Activated naive CD8-positive, alpha-beta T cell treated with anti-CD3 and anti-CD28 coated beads, Interleukin-2, amount 10 ng/mL, durations not matched to agents 7 days and 5 days (primary cell): ENCODE measurements at regions of chr9 and their contacts with region 1.

Region 1: DNA sequence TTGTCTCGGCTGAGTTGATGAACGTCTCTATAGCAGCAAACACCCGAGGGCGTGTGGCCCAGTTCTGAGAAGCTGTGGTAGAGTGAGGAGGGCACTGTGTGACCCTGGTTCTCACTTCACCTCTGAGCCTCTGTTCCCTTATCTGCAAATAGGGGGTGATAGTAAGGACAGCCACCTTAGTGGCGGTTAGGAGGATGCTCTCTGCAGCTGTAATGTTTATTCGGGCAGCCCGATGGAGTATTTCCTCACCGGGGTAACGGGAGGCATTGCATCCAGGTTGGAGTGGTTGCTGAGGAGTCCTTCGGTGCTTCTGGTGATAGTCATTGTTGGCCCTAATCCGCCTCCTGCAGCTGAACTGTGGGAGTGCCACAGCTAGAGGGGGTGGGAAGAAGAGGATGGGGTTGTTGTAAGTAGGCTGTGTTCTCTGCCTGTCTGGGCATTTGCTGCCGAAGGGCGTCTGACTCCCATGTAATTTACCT is 13.9 kb downstream of the PRRC2B start:
- DNase-seq: peak; percentile 56
- ATAC-seq: peak; percentile 70
- H3K4me3 Mint-ChIP-seq: peak overlapping the region; percentile 81
- H3K27ac Mint-ChIP-seq: peak overlapping the region; percentile 88
- H3K4me1 Mint-ChIP-seq: peaks cover 80% of the 10 kb centered on the region
- H3K27me3 Mint-ChIP-seq: no peaks in the 10 kb centered on the region

Region 2: GRCh38 chr9:131366761-131367401 is 40.9 kb before region 1 on chr9:
- POLR2A ChIA-PET with region 1: interaction called, 27 read pairs
- DNase-seq: no peak
- ATAC-seq: no peak
- H3K4me3 Mint-ChIP-seq: no peak overlapping the region
- H3K27ac Mint-ChIP-seq: no peak overlapping the region
- H3K4me1 Mint-ChIP-seq: peaks cover 4% of the 10 kb centered on the region
- H3K27me3 Mint-ChIP-seq: no peaks in the 10 kb centered on the region

Region 3: DNA sequence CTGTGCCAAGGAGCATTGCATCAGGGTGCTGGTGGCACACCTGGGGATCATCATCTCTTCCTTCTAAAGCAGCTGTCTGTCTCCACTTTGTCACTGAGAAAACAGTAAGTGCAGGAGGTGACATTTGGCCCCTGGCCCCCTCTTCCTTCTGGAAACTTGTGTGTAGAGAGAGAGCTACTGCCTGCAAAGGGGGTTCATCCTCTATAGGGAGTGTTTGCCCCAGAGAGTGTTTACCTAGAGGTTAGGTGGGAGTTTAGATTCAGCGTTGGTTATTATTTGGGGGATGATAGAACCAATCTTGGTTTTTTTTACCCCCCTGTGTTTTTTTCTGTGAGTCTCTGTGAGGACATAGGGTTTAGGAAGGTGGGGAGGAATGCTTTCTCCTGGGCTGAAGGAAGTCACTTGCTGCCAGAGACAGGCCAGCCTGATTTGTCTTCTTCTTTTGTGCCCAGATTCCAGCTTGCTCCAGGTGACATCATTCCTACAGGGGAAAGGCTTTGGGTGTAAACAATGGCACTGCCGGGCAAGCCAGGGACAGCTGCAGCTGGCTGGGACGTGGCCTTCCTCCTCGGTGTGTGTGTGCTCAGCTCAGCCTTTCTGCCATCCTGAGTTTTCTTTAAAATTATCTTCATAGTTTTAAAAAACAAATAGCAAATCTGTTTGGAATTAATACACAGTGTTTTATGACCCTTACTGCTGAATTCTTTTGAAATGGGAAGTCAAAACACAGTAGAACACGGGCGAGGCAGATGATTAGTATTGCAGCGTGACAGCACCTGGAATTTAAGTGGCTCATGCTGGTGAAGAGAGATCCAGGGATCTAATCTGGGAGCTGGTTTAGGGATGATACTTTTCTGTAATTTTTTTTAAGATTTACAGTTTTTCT is 10.6 kb after region 1 on chr9:
- POLR2A ChIA-PET with region 1: interaction called, 38 read pairs
- DNase-seq: no peak
- ATAC-seq: peak; percentile 3
- H3K4me3 Mint-ChIP-seq: peak overlapping the region; percentile 80
- H3K27ac Mint-ChIP-seq: peak overlapping the region; percentile 78
- H3K4me1 Mint-ChIP-seq: peaks cover 79% of the 10 kb centered on the region
- H3K27me3 Mint-ChIP-seq: no peaks in the 10 kb centered on the region

Region 4: DNA sequence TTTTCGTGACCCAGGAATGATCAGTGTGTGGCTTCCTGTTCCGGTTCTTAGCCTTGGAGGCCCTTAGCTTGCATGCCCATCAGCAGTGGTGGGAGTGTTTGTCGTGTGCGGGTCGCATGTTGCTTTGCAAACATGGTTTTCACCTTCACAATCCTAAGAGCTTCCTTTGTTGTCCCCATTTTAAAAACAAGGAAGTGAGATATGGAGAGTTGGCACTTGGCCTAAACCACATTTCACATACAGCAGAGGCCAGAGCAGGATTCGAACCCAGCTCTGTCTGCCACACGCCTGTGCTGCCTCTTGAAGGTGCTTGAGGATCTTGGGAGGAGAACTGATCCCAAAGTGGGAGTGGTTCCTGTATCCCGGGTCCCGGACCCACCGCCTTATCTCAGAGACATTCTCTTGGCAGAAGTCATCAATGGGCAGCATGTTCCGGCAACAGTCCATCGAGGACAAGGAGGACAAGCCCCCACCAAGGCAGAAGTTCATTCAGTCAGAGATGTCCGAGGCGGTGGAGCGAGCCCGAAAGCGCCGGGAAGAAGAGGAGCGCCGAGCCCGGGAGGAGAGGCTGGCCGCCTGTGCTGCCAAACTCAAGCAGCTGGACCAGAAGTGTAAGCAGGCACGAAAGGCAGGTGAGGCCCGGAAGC is 56.7 kb after region 1 on chr9:
- POLR2A ChIA-PET with region 1: no interaction called
- DNase-seq: peak; percentile 19
- ATAC-seq: no peak
- H3K4me3 Mint-ChIP-seq: no peak overlapping the region
- H3K27ac Mint-ChIP-seq: no peak overlapping the region
- H3K4me1 Mint-ChIP-seq: peaks cover 9% of the 10 kb centered on the region
- H3K27me3 Mint-ChIP-seq: no peaks in the 10 kb centered on the region

Region 5: GRCh38 chr9:131511416-131511815 is 103.7 kb after region 1 on chr9:
- POLR2A ChIA-PET with region 1: no interaction called
- DNase-seq: no peak
- ATAC-seq: no peak
- H3K4me3 Mint-ChIP-seq: no peak overlapping the region
- H3K27ac Mint-ChIP-seq: no peak overlapping the region
- H3K4me1 Mint-ChIP-seq: no peaks in the 10 kb centered on the region
- H3K27me3 Mint-ChIP-seq: no peaks in the 10 kb centered on the region

Region 6: GRCh38 chr9:132187121-132187620 is 779.4 kb after region 1 on chr9:
- POLR2A ChIA-PET with region 1: no interaction called
- DNase-seq: no peak
- ATAC-seq: no peak
- H3K4me3 Mint-ChIP-seq: no peak overlapping the region
- H3K27ac Mint-ChIP-seq: no peak overlapping the region
- H3K4me1 Mint-ChIP-seq: no peaks in the 10 kb centered on the region
- H3K27me3 Mint-ChIP-seq: peaks cover 15% of the 10 kb centered on the region